ENCODE measurements at regions of chr21 and their contacts with region 1.

Region 1: DNA sequence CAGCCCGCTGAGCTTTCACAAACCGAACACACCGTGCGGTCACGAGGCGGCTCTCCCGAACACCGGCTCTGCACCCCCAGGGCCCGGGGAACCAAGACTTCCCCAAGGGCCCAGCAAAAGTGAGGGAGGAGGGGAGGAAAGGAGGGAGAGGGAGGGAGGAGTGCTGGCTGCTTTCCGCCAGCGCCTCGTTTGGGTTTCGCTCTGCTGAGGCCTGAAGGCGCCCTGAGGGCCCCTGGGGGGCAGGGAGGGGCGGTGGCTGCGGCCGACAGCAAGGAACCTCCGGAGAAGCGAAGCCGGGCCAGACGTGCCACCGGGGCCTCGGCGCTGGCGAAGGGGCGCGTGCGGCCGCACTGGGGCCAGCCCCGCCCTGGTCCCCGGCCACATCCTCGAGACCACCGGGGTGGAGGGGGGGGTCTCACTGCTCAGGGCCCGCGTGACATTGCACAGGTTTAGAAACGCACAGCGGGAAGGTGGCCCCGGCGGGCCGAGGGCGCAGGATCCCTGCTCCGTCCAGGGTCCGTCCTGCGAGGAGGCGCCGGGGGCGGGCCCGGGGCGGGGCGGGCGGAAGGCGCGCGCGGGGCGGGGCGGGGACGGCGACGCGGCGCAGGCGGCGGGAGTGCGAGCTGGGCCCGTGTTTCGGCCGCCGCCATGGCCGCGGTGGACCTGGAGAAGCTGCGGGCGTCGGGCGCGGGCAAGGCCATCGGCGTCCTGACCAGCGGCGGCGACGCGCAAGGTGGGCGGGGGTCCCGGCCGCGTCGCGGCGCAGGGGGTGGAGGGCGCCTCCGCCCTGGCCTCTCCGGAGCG is at the start of gene PFKL:
- DNase-seq: peak; percentile 88
- total RNA-seq, gene PFKL: 60.3 TPM

Region 2: DNA sequence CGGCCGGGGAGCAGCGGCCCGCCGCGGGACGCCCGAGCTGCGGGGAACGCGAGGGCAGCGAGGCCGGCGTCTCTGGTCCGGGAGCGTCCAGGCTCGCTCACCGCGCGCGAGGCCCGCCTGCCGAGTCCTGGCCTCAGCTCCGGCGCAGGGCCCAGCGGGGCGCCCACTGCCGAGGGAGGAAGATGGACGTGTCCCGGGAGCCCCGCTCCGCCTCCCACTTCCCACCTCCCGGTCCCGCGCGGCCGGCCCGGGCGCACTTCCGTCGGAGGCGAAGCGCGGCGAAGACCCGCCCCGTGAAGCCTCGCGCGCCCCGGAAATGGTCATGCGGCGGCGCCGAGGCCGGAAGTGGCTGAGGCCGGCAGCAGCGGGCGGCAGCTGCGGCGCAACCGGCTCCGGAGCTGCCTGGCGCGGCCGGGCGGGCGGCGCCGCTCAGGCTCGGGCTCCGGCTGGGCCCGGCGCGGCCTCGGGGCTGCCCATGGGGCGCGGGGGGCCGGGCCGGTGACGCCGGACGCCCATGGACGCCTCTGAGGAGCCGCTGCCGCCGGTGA is 287.6 kb before region 1 on chr21 and contains the start of gene TRAPPC10:
- intact Hi-C with region 1: loop called (anchors 10 kb)
- DNase-seq: peak; percentile 93
- total RNA-seq, gene TRAPPC10: 22.2 TPM

Region 3: DNA sequence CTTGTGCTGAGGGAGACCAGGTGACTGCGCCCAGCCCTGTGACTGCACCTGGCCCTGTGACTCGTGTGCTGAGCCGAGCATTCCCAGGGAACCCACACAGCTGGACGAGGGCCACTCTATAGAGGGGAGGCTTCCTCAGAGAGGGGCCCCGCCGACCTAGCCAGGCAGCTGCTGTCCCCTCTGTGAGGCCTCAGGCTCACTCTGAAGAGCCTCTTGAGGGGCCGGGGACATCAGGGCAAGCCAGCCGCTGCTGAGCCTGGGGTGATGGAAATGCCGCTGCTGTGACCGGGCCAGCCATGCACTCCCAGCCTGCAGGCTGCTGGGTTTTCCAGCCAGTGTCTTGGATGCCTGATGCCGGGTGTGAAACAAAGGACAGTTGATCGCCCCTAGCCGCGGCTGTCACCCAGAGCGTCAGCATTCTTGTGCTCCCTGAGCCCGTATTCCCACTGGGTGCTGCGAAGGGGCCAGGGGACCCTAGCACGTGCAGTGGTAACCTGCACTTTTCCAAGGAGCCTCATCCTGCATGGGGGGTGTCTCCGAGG is 17.7 kb after region 1 on chr21:
- intact Hi-C with region 1: no loop called
- DNase-seq: no peak

Measured in cardiac septum (tissue), 1 donor.